CD4-positive, alpha-beta T cell (primary cell): ENCODE measurements at regions of chr20 and their contacts with region 1.

Region 1: GRCh38 chr20:50509935-50510705 is at the start of gene PTPN1:
- DNase-seq: peak; percentile 98 to 100 (median 99)
- ATAC-seq: peak; percentile 96
- H3K4me3 ChIP-seq: peak within 1 kb of the TSS; percentile 84
- H3K4me3 Mint-ChIP-seq: peak within 1 kb of the TSS; percentile 96
- H3K27ac ChIP-seq: peak within 1 kb of the TSS; percentile 81 to 87
- H3K27ac Mint-ChIP-seq: peak within 1 kb of the TSS; percentile 92
- H3K4me1 ChIP-seq: peaks cover 26% of the 10 kb centered on the region
- H3K4me1 Mint-ChIP-seq: peaks cover 58% of the 10 kb centered on the region
- H3K27me3 ChIP-seq: no peaks in the 10 kb centered on the region
- H3K27me3 Mint-ChIP-seq: no peaks in the 10 kb centered on the region
- CTCF ChIP-seq: no peak
- total RNA-seq, gene PTPN1: 82.3 to 82.8 TPM

Region 2: GRCh38 chr20:49936153-49937027 is 573.7 kb before region 1 on chr20 and contains the start of gene RNF114:
- CTCF ChIA-PET with region 1: no interaction called
- POLR2A ChIA-PET with region 1: interaction called, 10 read pairs
- intact Hi-C with region 1: no loop called
- DNase-seq: peak; percentile 84 to 97 (median 90)
- ATAC-seq: peak; percentile 96
- H3K4me3 ChIP-seq: peak within 1 kb of the TSS; percentile 97
- H3K4me3 Mint-ChIP-seq: peak within 1 kb of the TSS; percentile 93
- H3K27ac ChIP-seq: peak within 1 kb of the TSS; percentile 81 to 82
- H3K27ac Mint-ChIP-seq: peak within 1 kb of the TSS; percentile 90
- H3K4me1 ChIP-seq: peaks cover 42% of the 10 kb centered on the region
- H3K4me1 Mint-ChIP-seq: peaks cover 51% of the 10 kb centered on the region
- H3K27me3 ChIP-seq: no peaks in the 10 kb centered on the region
- H3K27me3 Mint-ChIP-seq: no peaks in the 10 kb centered on the region
- CTCF ChIP-seq: no peak
- total RNA-seq, gene RNF114: 129 to 132 TPM

Region 3: DNA sequence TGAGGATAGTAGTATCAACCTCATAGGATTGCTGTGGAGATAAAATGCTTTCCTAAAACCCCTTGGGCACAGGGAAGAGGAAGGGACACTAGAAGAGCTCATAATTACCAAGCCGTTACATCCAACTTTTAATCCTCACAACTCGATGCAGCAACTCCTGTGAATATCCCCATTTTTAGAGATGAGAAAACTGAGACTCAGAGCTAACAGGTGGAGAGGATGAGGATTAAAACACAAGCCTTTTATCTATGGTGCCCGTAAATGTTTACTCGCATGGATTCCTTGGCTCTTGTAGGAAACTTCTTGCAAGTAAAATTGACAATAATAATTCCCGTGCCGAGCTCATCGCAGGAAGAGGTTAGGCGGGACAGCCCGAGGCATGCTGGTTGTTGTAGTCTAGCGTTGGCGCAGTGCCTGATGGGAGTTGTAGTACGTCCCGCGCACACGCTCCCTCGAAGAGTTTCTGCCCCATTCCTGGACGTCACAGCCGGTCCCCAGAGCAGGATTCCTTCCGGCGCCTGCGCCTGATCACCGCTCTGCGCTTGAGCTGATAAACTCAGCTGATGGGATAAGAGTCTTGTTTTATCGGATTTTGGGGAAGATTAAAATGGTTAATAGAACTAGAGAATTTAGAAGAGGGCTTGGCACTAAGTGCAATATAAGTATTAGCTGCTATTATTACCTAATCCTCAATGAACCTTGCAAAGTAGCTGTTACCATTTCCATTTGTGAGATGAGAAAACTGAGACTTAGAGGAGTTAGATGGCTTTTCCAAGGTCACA is 394.3 kb before region 1 on chr20:
- CTCF ChIA-PET with region 1: interaction called, 3 read pairs
- POLR2A ChIA-PET with region 1: interaction called, 8 read pairs
- intact Hi-C with region 1: loop called in 1 of 2 experiments (anchors 5 kb)
- DNase-seq: peak; percentile 82 to 97 (median 88)
- ATAC-seq: peak; percentile 83
- H3K4me3 ChIP-seq: peak overlapping the region; percentile 58
- H3K4me3 Mint-ChIP-seq: peak overlapping the region; percentile 92
- H3K27ac ChIP-seq: no peak overlapping the region
- H3K27ac Mint-ChIP-seq: peak overlapping the region; percentile 85
- H3K4me1 ChIP-seq: peaks cover 53% of the 10 kb centered on the region
- H3K4me1 Mint-ChIP-seq: peaks cover 53% of the 10 kb centered on the region
- H3K27me3 ChIP-seq: no peaks in the 10 kb centered on the region
- H3K27me3 Mint-ChIP-seq: no peaks in the 10 kb centered on the region
- CTCF ChIP-seq: no peak

Region 4: DNA sequence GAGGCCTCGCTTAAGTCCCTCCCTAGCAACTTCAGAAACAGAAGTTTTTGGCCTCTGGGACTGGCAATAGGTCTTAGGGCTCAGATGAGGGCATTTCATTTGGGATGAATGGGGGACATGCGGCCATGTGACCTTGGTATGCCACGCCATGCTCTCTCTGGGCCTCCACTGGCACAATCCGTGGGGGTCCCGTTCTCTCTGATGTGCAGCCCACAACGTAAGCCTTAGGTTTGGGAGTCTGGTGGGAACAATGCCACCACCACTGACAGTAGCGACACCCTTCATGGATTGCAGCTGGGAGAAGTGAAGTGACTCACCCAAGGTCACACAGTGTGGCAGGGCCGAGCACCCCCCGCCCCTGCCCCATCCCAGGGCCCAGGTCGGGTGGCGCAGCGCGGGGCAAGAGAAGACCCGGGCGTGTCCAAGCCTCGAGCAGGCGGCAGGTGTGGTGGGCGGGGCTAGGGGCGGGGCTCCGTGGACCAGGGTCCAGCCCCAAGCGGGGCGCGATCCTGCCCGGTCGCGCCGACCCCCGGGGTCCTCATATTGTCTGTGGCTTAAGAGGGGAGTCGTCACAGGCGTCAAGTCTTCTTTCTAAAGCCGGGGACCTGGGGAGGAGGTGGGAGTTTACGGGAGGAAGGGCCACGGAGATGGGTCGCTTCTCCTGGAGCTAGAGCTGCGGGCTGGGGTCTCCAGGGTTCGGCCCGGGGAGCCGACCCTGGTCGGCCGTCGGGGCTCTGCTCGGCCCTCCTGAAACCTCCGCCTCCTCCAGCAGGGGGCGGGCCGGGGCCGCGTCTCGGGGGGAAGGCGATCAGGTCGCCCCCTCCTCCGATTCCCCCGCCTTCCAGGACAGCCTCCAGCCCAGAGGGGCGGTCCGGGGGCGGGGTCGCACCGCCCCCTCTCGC is 320.2 kb before region 1 on chr20:
- CTCF ChIA-PET with region 1: no interaction called
- POLR2A ChIA-PET with region 1: interaction called, 21 read pairs
- intact Hi-C with region 1: no loop called
- DNase-seq: peak; percentile 73 to 91 (median 80)
- ATAC-seq: peak; percentile 54
- H3K4me3 ChIP-seq: peak overlapping the region; percentile 75
- H3K4me3 Mint-ChIP-seq: peak overlapping the region; percentile 76
- H3K27ac ChIP-seq: no peak overlapping the region
- H3K27ac Mint-ChIP-seq: peak overlapping the region; percentile 42
- H3K4me1 ChIP-seq: peaks cover 38% of the 10 kb centered on the region
- H3K4me1 Mint-ChIP-seq: peaks cover 21% of the 10 kb centered on the region
- H3K27me3 ChIP-seq: peaks cover 0 to 5% of the 10 kb centered on the region in 2 experiments
- H3K27me3 Mint-ChIP-seq: peaks cover 10% of the 10 kb centered on the region
- CTCF ChIP-seq: peak; percentile 61

Region 5: DNA sequence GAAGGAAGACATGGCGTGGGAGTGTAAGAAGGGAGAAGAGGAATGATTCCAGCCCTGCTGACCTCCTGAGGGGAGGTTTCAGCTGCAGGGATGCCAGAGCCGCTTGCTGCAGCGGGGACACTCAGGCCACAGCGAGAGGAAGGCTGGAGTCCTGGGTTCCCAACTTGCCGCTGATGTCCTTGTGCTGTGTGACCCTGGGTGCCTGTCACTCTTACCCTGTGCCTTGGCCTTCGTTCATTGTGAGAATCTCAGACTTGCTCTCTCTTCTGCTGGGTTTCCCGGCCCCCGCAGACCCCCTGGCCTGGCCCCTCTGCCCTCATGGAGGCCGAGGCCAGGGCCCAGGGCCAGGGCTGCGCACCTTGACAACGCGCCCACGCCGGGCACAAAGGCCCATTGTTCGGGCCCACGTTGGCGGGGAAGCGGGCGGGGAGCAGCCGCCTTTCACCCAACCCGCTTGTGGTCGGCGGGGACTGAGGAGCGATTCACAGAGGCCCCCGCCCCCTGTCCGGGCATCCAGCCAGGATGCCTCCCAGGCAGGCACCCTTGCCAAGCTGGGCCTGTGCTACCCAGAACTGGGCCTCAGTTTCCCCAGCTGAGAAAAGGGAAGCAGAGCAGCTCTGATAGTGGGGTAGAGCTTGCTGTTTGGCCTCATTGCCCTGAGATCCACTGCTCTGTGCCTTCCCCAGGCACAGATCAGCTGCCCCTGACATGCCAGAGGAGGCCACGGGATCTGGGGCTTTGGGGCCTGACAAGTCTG is 267.1 kb before region 1 on chr20:
- CTCF ChIA-PET with region 1: no interaction called
- POLR2A ChIA-PET with region 1: no interaction called
- intact Hi-C with region 1: no loop called
- DNase-seq: no peak
- ATAC-seq: no peak
- H3K4me3 ChIP-seq: no peak overlapping the region
- H3K4me3 Mint-ChIP-seq: no peak overlapping the region
- H3K27ac ChIP-seq: no peak overlapping the region
- H3K27ac Mint-ChIP-seq: no peak overlapping the region
- H3K4me1 ChIP-seq: no peaks in the 10 kb centered on the region
- H3K4me1 Mint-ChIP-seq: no peaks in the 10 kb centered on the region
- H3K27me3 ChIP-seq: no peaks in the 10 kb centered on the region
- H3K27me3 Mint-ChIP-seq: no peaks in the 10 kb centered on the region
- CTCF ChIP-seq: no peak

Region 6: DNA sequence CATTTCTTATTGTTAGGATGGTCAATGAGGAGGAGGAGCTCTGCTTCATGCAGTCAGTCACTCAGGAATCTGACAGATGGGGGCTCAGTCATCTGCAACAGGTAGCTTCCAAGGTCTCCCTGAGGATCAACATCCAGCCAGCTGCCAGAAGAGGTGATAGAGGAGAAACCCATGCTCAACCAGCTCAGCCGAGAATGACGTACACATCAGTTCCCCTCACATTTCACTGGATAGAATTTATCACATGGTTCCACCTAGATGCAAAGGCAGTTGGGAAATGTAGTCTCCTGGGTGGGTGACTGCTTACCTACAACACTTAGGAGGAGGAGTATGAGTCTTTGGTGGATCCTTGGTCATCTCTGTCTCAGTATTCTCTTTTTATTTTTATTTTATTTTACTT is 175.0 kb before region 1 on chr20:
- CTCF ChIA-PET with region 1: no interaction called
- POLR2A ChIA-PET with region 1: no interaction called
- intact Hi-C with region 1: no loop called
- DNase-seq: peak in 3 of 14 experiments; percentile 21 to 51 (median 48)
- ATAC-seq: peak; percentile 63
- H3K4me3 ChIP-seq: no peak overlapping the region
- H3K4me3 Mint-ChIP-seq: no peak overlapping the region
- H3K27ac ChIP-seq: no peak overlapping the region
- H3K27ac Mint-ChIP-seq: no peak overlapping the region
- H3K4me1 ChIP-seq: peaks cover 25% of the 10 kb centered on the region
- H3K4me1 Mint-ChIP-seq: peaks cover 26% of the 10 kb centered on the region
- H3K27me3 ChIP-seq: no peaks in the 10 kb centered on the region
- H3K27me3 Mint-ChIP-seq: no peaks in the 10 kb centered on the region
- CTCF ChIP-seq: no peak

Region 7: GRCh38 chr20:50541606-50542041 is 31.5 kb after region 1 on chr20:
- CTCF ChIA-PET with region 1: interaction called, 4 read pairs
- POLR2A ChIA-PET with region 1: interaction called, 14 read pairs
- intact Hi-C with region 1: no loop called
- DNase-seq: no peak
- ATAC-seq: no peak
- H3K4me3 ChIP-seq: no peak overlapping the region
- H3K4me3 Mint-ChIP-seq: peak overlapping the region; percentile 8
- H3K27ac ChIP-seq: no peak overlapping the region
- H3K27ac Mint-ChIP-seq: peak overlapping the region; percentile 43
- H3K4me1 ChIP-seq: peaks cover 46% of the 10 kb centered on the region
- H3K4me1 Mint-ChIP-seq: peaks cover 74% of the 10 kb centered on the region
- H3K27me3 ChIP-seq: no peaks in the 10 kb centered on the region
- H3K27me3 Mint-ChIP-seq: no peaks in the 10 kb centered on the region
- CTCF ChIP-seq: no peak

Region 8: DNA sequence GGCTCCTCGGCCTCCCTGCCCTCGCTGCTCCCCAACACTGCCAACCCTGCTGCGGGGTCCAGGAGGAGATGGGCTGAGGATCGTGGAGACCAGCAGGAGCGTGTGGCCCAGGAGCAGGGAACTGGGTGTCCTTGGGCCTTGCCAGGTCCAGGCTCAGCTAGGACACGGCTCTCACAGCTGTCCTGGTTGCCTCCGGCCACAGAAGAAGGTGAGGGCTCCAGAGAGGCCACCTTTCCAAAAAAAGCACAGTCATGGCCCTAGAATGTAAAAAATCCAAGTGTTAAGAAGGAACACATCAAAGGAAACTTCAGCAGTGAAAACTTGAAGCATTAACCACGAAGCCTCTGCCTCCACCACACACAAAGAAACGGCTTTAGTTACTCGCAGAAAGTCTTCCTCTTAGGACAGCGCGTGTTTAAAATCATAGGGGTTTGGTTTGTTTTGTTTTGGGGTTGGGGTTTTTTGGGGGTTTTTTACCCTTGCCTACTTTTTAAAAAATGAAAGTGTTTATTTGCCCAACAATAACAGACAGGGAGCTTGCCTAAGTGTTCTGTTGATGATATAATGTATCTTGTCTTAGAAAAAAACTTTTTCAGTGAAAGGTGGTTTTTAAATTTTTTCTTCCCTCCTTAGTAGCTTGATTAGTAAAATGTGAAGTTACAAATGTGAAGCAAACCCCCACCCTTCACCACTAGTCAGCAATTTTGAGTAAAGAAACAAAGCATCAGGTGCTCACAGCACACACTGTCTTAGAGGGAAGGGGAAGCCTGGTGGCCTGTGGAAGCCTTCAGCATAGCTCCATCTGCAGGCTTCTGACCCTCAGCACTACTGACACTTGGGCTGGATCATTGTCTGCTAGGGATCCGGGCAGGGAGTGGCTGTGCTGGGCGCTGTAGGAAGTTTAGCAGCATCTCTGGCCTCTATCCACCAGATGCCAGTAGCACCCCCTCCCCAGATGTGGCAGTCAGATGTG is 60.0 kb after region 1 on chr20:
- CTCF ChIA-PET with region 1: interaction called, 8 read pairs
- POLR2A ChIA-PET with region 1: interaction called, 13 read pairs
- intact Hi-C with region 1: loop called (anchors 2 to 5 kb)
- DNase-seq: peak in 8 of 14 experiments; percentile 20 to 71 (median 38)
- ATAC-seq: peak; percentile 79
- H3K4me3 ChIP-seq: no peak overlapping the region
- H3K4me3 Mint-ChIP-seq: peak overlapping the region; percentile 8
- H3K27ac ChIP-seq: peak overlapping the region in 1 of 2 donors; percentile 0
- H3K27ac Mint-ChIP-seq: peak overlapping the region; percentile 43
- H3K4me1 ChIP-seq: peaks cover 25% of the 10 kb centered on the region
- H3K4me1 Mint-ChIP-seq: peaks cover 78% of the 10 kb centered on the region
- H3K27me3 ChIP-seq: no peaks in the 10 kb centered on the region
- H3K27me3 Mint-ChIP-seq: no peaks in the 10 kb centered on the region
- CTCF ChIP-seq: peak; percentile 46

Region 9: DNA sequence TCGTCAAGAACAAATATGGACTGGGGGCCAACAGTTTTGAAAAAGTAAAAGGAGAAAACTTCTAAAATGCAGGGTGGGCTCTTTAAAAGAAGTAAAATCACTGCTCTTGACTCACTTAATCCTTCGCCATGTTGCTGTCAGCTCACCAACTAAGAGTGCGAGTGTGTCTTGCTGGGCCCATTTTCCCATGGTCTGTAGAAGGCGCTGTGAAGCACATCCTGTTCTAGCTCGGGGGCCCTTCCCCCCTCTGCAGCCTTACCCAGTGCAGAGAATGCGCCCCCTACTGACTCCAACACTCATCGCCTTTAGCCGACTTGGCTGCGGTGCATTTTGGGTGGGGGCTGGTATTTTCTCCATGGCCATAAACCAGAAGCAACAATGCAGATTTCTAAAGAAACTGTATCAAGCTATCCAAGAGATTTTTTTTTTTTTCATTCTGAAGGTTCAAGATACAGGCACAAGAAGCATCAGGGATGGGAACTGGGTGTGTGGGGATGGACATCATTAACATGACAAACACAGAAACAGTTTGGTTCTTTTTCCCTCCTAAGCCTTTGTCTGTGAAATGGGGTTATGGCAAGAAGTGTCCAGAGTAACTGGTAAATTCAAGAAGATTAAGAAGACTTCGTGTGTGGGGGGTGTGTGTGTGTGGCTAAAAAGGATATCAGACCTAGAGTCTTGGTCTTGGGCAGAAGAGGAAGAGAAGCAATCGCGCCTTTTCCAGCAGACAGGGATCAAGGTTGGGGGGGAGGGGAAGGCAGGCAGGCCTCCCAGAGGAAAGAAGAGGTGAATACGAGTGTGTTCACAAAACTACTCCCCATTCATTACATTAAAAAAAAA is 419.4 kb after region 1 on chr20:
- CTCF ChIA-PET with region 1: no interaction called
- POLR2A ChIA-PET with region 1: interaction called, 3 read pairs
- intact Hi-C with region 1: loop called (anchors 10 kb)
- DNase-seq: peak; percentile 76 to 97 (median 90)
- ATAC-seq: peak; percentile 76
- H3K4me3 ChIP-seq: peak overlapping the region; percentile 66
- H3K4me3 Mint-ChIP-seq: peak overlapping the region; percentile 93
- H3K27ac ChIP-seq: peak overlapping the region; percentile 2 to 37
- H3K27ac Mint-ChIP-seq: peak overlapping the region; percentile 98
- H3K4me1 ChIP-seq: peaks cover 37% of the 10 kb centered on the region
- H3K4me1 Mint-ChIP-seq: peaks cover 69% of the 10 kb centered on the region
- H3K27me3 ChIP-seq: no peaks in the 10 kb centered on the region
- H3K27me3 Mint-ChIP-seq: no peaks in the 10 kb centered on the region
- CTCF ChIP-seq: peak; percentile 90

Region 10: DNA sequence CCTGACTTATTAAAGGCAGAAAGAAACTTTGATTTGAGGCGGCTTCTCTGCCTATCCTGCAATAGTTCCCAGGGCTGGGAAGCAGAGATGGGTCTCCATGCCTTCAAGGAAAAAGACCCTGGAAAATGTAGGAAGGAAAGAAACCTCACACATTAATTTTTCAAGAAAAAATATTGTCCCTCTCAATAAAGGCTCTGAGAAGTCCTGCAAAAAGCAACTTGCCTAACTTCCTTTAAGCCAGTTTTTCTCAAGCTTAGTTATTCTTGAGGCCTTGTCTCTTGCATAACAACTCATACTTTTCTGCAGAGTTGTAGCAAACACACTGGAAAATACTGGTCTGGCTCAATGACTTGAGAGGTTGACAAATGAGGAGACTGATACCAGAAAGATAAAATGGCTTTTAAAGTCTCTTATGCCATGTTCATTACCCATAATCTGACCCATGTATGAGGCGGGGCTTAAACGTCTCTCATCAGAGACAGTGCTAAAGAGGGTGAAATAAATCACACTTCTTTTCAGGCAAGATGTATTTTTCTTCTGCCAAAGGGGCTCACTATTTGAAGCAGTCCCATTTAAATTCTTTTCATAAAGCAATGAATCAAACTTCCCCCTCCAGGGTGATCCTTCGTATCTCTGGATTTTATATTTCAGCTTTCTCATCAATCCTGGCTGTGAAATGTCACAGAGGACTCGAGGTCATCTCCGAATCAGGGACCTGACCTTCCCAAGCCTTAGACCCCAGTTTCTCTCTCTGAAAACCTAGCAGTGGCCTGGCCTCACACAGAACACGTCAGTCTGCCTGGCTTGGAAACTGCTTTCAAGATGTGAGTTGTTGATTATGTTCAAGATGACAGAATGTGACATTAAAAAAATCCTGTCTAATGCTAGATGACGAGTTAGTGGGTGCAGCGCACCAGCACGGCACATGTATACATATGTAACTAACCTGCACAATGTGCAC is 595.1 kb after region 1 on chr20:
- CTCF ChIA-PET with region 1: no interaction called
- POLR2A ChIA-PET with region 1: no interaction called
- intact Hi-C with region 1: no loop called
- DNase-seq: no peak
- ATAC-seq: no peak
- H3K4me3 ChIP-seq: no peak overlapping the region
- H3K4me3 Mint-ChIP-seq: no peak overlapping the region
- H3K27ac ChIP-seq: no peak overlapping the region
- H3K27ac Mint-ChIP-seq: no peak overlapping the region
- H3K4me1 ChIP-seq: no peaks in the 10 kb centered on the region
- H3K4me1 Mint-ChIP-seq: no peaks in the 10 kb centered on the region
- H3K27me3 ChIP-seq: no peaks in the 10 kb centered on the region
- H3K27me3 Mint-ChIP-seq: peaks cover 38% of the 10 kb centered on the region
- CTCF ChIP-seq: no peak

Region 11: DNA sequence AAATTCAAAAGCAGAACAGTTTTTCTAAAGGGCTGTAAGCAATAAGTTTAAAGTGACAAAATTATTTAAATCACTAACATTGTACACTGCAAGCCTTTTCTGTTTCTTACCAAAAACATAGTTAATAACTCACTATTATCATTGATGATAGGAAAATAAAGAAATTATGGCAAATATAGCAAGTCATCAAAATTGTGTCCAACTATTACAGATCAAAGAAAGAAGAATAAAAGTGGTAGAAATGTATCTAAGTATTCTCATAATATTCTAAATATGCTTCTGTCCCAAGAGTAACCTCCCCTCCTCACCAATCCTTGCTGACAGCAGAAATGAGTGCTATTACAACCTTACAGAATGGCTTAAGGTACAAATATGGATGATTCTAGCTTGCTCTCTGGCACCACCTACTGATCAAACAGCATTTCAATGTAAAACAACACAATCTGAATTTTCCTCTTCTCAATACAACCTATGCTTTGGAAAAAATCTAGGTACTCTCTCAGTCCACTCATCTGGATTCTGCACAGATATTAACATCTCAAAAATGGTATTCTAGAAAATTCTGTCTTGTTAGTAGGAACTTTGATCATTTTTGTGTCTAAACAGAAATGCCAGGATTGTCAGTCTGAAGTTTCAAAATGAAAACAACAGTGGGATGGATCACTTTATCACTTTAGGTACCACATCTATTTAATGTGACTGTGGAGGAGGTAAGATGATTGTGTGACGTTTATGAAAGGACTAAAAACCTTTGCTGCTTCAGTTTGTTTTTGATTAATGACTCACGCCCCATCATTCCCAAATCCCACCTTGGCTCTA is 1640.5 kb after region 1 on chr20:
- CTCF ChIA-PET with region 1: no interaction called
- POLR2A ChIA-PET with region 1: no interaction called
- intact Hi-C with region 1: no loop called
- DNase-seq: peak in 5 of 14 experiments; percentile 3 to 58 (median 41)
- ATAC-seq: peak; percentile 39
- H3K4me3 ChIP-seq: no peak overlapping the region
- H3K4me3 Mint-ChIP-seq: no peak overlapping the region
- H3K27ac ChIP-seq: no peak overlapping the region
- H3K27ac Mint-ChIP-seq: no peak overlapping the region
- H3K4me1 ChIP-seq: no peaks in the 10 kb centered on the region
- H3K4me1 Mint-ChIP-seq: no peaks in the 10 kb centered on the region
- H3K27me3 ChIP-seq: no peaks in the 10 kb centered on the region
- H3K27me3 Mint-ChIP-seq: no peaks in the 10 kb centered on the region
- CTCF ChIP-seq: peak; percentile 98